Posterior cingulate gyrus (tissue), 11 donors: ENCODE measurements at regions of chr19 and their contacts with region 1.

Region 1: DNA sequence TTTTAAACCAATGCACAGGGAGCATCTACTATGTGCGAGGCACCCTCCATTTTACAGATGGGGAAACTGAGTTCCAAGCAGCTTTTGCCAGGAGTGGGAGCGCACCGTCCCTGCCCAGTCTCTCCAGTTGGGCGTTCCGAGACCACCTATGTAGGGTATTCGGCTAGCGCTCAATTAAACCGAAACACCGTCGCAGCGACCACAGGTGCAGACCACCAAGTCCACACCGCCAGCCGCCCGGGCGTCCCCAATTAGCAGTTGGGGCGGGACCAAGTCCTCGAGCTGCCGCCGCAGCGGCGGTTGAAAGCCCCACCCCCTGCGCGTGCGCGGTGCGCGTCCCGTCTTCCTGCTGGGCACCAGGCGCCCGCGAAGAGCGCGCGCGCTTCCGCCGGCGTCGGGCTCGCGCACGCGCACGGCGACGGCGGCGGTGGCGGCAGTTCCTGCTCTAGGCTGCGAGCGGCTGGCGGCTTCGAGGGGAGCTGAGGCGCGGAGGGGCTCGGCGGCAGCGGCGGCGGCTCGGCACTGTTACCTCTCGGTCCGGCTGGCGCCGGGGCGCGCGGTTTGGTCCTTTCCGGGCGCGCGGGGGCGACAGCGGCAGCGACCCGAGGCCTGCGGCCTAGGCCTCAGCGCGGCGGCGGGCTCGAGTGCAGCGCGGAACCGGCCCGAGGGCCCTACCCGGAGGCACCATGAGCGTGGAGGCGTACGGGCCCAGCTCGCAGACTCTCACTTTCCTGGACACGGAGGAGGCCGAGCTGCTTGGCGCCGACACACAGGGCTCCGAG is at the start of gene UPF1:
- DNase-seq: peak; percentile 87 to 99 (median 92)

Region 2: DNA sequence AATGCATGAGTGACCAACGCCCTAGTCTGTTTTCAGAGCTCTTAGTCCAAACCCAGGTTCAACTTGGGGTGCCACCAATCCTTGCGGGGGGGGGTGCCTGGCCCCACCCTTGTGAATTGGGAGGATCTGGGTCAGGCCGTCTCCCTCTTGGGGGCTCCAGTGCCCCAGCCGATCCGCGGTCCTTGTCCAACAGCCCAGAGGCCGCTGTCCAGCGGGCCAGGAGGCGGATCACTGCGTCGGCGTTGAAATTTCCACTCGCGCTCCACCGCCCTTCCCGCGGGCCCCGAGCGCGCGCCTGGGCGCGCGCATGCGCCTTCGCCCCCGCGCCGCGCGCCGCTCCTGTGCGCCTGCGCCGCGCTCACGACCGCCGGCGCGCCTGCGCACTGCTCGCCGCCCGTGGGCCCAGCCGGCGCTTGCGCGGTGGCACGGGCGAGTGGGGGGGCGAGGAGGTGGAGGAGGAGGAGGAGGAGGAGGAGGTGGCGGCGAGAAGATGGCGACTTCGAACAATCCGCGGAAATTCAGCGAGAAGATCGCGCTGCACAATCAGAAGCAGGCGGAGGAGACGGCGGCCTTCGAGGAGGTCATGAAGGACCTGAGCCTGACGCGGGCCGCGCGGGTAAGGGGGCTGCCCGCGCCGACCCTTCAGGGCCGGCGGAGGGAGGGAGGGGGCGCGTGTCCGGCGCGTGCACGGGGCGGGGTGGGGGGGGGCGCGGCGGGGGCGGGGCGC is 148.3 kb before region 1 on chr19 and contains the start of gene CRTC1:
- intact Hi-C with region 1: loop called (anchors 5 kb)
- DNase-seq: peak; percentile 66 to 96 (median 75)